ENCODE measurements at regions of chr15 and their contacts with region 1.

Region 1: GRCh38 chr15:84840741-84841429 is 23.7 kb downstream of the ALPK3 start:
- DNase-seq: peak; percentile 89
- H3K4me3 Mint-ChIP-seq: peak overlapping the region; percentile 49
- H3K27ac Mint-ChIP-seq: peak overlapping the region; percentile 93
- H3K4me1 Mint-ChIP-seq: peaks cover 37% of the 10 kb centered on the region
- H3K27me3 Mint-ChIP-seq: peaks cover 24% of the 10 kb centered on the region
- CTCF ChIP-seq: no peak

Region 2: GRCh38 chr15:84575493-84575892 is 265.4 kb before region 1 on chr15:
- CTCF ChIA-PET with region 1: no interaction called
- intact Hi-C with region 1: loop called (anchors 5 kb)
- DNase-seq: no peak
- H3K4me3 Mint-ChIP-seq: no peak overlapping the region
- H3K27ac Mint-ChIP-seq: no peak overlapping the region
- H3K4me1 Mint-ChIP-seq: peaks cover 31% of the 10 kb centered on the region
- H3K27me3 Mint-ChIP-seq: no peaks in the 10 kb centered on the region
- CTCF ChIP-seq: no peak

Region 3: DNA sequence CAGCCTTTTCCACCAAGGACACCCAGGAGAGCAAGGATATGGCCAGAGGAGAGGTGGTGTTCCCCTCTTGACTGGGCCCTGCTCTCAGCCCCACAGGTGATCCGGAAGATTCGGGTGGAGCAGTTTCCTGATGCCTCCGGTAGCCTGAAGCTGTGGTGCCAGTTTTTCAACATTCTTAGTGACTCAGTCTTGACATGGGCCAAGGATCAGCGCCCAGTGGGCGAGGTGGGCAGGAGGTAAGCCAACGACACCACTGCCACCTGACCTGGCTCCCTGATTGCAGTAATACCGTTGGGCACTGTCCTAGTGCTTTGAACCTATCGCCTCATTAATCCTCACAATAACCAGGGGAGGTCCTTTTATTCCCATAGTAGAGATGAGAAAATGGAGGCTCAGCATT is 18.3 kb after region 1 on chr15:
- CTCF ChIA-PET with region 1: no interaction called
- intact Hi-C with region 1: loop called (anchors 1 kb)
- DNase-seq: peak; percentile 94
- H3K4me3 Mint-ChIP-seq: peak overlapping the region; percentile 16
- H3K27ac Mint-ChIP-seq: peak overlapping the region; percentile 94
- H3K4me1 Mint-ChIP-seq: peaks cover 66% of the 10 kb centered on the region
- H3K27me3 Mint-ChIP-seq: no peaks in the 10 kb centered on the region
- CTCF ChIP-seq: no peak